Calu3 (cell line): ENCODE measurements at regions of chrX and their contacts with region 1.

Region 1: DNA sequence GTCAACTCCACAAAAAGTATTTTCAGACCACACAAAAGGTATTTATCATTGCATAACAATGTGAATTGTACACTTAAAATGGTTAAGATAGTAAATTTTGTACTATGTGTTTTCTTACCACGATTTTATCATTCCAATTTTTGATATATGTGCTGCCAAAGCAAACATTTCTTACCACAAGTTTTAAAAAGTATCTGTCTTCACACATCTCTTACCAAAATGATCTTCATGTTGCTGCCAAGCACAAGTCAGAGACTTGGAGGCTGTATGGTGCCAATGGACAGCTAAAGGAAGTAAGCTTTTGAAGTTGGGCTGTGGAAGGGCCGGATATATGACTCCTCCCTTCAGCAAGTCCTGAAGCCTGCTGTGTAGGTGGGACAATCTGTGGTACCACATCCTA is 67.9 kb downstream of the TMLHE start:
- DNase-seq: no peak
- H3K4me3 Mint-ChIP-seq: no peak overlapping the region
- H3K27ac Mint-ChIP-seq: no peak overlapping the region
- H3K4me1 Mint-ChIP-seq: no peaks in the 10 kb centered on the region
- H3K27me3 Mint-ChIP-seq: no peaks in the 10 kb centered on the region
- CTCF ChIP-seq: no peak

Region 2: GRCh38 chrX:155612312-155613224 is 67.7 kb after region 1 on chrX and contains the start of gene TMLHE:
- CTCF ChIA-PET with region 1: no interaction called
- intact Hi-C with region 1: loop called (anchors 10 kb)
- DNase-seq: peak; percentile 75
- H3K4me3 Mint-ChIP-seq: peak within 1 kb of the TSS; percentile 86
- H3K27ac Mint-ChIP-seq: peak within 1 kb of the TSS; percentile 87
- H3K4me1 Mint-ChIP-seq: no peaks in the 10 kb centered on the region
- H3K27me3 Mint-ChIP-seq: no peaks in the 10 kb centered on the region
- CTCF ChIP-seq: no peak
- total RNA-seq, gene TMLHE: 21.3 and 21.5 TPM in 2 replicates

Region 3: DNA sequence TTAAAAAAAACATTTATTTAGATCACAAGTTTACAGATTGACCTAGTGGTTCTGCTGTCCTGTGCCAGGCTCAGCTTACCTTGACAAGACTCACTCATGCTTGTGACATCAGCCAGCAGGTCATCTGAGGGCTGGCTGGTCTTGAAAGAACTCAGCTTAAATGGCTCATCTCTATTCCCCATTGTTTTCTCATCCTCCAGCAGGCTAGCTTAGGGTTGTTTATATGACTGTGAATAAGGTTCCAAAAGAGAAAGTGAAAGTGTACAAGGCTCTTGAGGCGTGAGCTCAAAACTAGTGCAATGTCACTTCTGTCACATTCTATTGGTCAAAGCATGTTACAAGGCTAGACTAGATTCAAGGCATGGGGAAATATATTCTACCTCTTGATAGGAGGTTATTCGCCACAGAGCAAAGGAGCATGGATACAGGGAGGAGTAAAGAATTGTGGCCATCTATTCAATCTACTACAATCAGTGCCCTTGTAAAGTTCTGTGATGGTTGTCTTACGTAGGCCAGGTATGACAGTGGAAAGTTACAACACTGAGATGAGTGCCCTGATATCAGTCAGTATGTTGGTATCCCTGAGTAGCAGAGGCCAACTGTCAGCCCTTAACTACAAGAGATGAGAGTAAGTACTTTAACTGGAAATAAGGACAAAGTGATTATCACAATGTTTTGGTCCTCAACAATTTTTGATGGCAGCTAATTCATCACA is 87.7 kb after region 1 on chrX:
- CTCF ChIA-PET with region 1: no interaction called
- intact Hi-C with region 1: no loop called
- DNase-seq: no peak
- H3K4me3 Mint-ChIP-seq: peak overlapping the region; percentile 40
- H3K27ac Mint-ChIP-seq: no peak overlapping the region
- H3K4me1 Mint-ChIP-seq: no peaks in the 10 kb centered on the region
- H3K27me3 Mint-ChIP-seq: no peaks in the 10 kb centered on the region
- CTCF ChIP-seq: no peak